CD8-positive, alpha-beta memory T cell (primary cell): ENCODE measurements at regions of chr5 and their contacts with region 1.

Region 1: GRCh38 chr5:134845852-134846640 is at the start of gene C5orf24:
- DNase-seq: peak; percentile 84 to 94 (median 90)
- H3K4me3 ChIP-seq: peak within 1 kb of the TSS; percentile 70
- H3K4me3 Mint-ChIP-seq: peak within 1 kb of the TSS; percentile 84 to 96 (median 88)
- H3K27ac ChIP-seq: peak within 1 kb of the TSS; percentile 92
- H3K27ac Mint-ChIP-seq: peak within 1 kb of the TSS; percentile 92 to 98 (median 96)
- H3K4me1 ChIP-seq: peaks cover 25% of the 10 kb centered on the region
- H3K4me1 Mint-ChIP-seq: peaks cover 30 to 40% (median 39%) of the 10 kb centered on the region in 3 donors
- H3K27me3 ChIP-seq: no peaks in the 10 kb centered on the region
- H3K27me3 Mint-ChIP-seq: no peaks in the 10 kb centered on the region
- total RNA-seq, gene C5orf24: 28.9 to 29.8 TPM

Region 2: GRCh38 chr5:134873987-134874830 is 28.2 kb after region 1 on chr5 and contains the start of gene TXNDC15:
- CTCF ChIA-PET with region 1: interaction called, 4 read pairs
- POLR2A ChIA-PET with region 1: interaction called, 15 read pairs
- DNase-seq: peak; percentile 73 to 88 (median 79)
- H3K4me3 ChIP-seq: peak within 1 kb of the TSS; percentile 99
- H3K4me3 Mint-ChIP-seq: peak within 1 kb of the TSS; percentile 93 to 99 (median 95)
- H3K27ac ChIP-seq: peak within 1 kb of the TSS; percentile 88
- H3K27ac Mint-ChIP-seq: peak within 1 kb of the TSS; percentile 92 to 99 (median 97)
- H3K4me1 ChIP-seq: peaks cover 34% of the 10 kb centered on the region
- H3K4me1 Mint-ChIP-seq: peaks cover 39 to 48% (median 45%) of the 10 kb centered on the region in 3 donors
- H3K27me3 ChIP-seq: no peaks in the 10 kb centered on the region
- H3K27me3 Mint-ChIP-seq: no peaks in the 10 kb centered on the region
- total RNA-seq, gene TXNDC15: 44.5 to 47.3 TPM